Endothelial cell of umbilical vein (primary cell): ENCODE measurements at regions of chr20 and their contacts with region 1.

Region 1: DNA sequence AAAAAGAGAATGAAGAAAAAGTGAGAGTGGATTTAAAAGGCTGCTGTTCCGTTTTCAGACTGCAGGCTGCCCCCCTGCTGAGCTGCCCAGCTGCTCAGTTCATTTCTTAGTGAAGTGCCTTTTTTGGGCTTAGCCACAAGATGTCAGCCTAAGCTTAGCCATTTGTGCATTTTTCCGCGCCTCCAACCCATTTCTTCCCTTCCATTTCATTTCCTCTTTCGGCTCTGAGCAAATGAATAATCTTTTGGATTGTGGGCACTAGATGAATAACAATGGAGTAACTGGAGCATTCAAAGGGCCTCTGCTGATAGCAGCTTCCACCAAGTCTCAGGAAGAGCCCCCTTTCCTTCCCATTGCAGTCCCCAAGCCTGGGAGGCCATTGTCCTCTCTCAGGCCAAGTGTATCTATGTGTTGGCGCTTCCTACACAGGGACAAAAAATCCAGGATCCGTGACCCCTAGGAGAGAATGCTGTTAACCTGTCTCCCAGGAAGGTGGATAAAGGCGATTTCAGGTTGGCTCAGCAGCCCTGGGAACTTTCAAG is 83.5 kb upstream of the SPTLC3 start:
- DNase-seq: peak; percentile 81
- H3K4me3 ChIP-seq: no peak overlapping the region
- H3K27ac ChIP-seq: no peak overlapping the region
- H3K4me1 ChIP-seq: peaks cover 29% of the 10 kb centered on the region
- H3K27me3 ChIP-seq: peaks cover 2 to 3% of the 10 kb centered on the region in 2 experiments
- CTCF ChIP-seq: peak; percentile 90 to 96
- POLR2A ChIP-seq: no peak

Region 2: GRCh38 chr20:11676630-11677284 is 1248.5 kb before region 1 on chr20:
- CTCF ChIA-PET with region 1: interaction called, 8 read pairs
- POLR2A ChIA-PET with region 1: no interaction called
- dilution Hi-C with region 1: no loop called
- intact Hi-C with region 1: loop called (anchors 2 kb)
- DNase-seq: peak; percentile 51
- H3K4me3 ChIP-seq: no peak overlapping the region
- H3K27ac ChIP-seq: no peak overlapping the region
- H3K4me1 ChIP-seq: no peaks in the 10 kb centered on the region
- H3K27me3 ChIP-seq: peaks cover 0 to 5% of the 10 kb centered on the region in 2 experiments
- CTCF ChIP-seq: peak; percentile 70 to 75
- POLR2A ChIP-seq: no peak

Region 3: DNA sequence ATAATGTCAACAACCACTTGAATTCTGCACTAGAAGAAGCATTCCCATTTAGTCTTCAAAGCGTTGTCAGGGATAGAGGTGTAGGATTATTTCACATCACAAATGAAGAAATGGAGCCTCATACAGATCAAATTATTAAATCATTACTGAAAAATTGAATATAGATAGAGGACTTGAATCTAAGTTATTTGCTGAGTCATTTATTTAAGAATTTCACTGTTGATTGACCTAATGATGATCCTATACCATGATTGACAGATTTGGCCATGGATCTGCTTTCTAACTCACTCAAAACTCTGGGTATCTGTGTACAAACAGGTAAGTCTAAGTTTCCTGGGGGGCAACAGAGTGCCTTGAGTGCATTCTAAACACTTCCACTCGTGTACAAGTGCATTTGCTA is 791.7 kb before region 1 on chr20:
- CTCF ChIA-PET with region 1: no interaction called
- POLR2A ChIA-PET with region 1: no interaction called
- dilution Hi-C with region 1: no loop called
- intact Hi-C with region 1: no loop called
- DNase-seq: no peak
- H3K4me3 ChIP-seq: no peak overlapping the region
- H3K27ac ChIP-seq: no peak overlapping the region
- H3K4me1 ChIP-seq: no peaks in the 10 kb centered on the region
- H3K27me3 ChIP-seq: no peaks in the 10 kb centered on the region
- CTCF ChIP-seq: no peak
- POLR2A ChIP-seq: no peak

Region 4: GRCh38 chr20:12970372-12970821 is 45.1 kb after region 1 on chr20:
- CTCF ChIA-PET with region 1: interaction called, 299 read pairs
- POLR2A ChIA-PET with region 1: no interaction called
- dilution Hi-C with region 1: no loop called
- intact Hi-C with region 1: loop called (anchors 1 kb)
- DNase-seq: peak; percentile 56
- H3K4me3 ChIP-seq: no peak overlapping the region
- H3K27ac ChIP-seq: no peak overlapping the region
- H3K4me1 ChIP-seq: no peaks in the 10 kb centered on the region
- H3K27me3 ChIP-seq: peaks cover 0 to 6% of the 10 kb centered on the region in 2 experiments
- CTCF ChIP-seq: peak; percentile 27 to 42
- POLR2A ChIP-seq: no peak

Region 5: GRCh38 chr20:13119583-13119982 is 194.3 kb after region 1 on chr20:
- CTCF ChIA-PET with region 1: interaction called, 11 read pairs
- POLR2A ChIA-PET with region 1: no interaction called
- dilution Hi-C with region 1: no loop called
- intact Hi-C with region 1: loop called (anchors 1 kb)
- DNase-seq: peak; percentile 64
- H3K4me3 ChIP-seq: no peak overlapping the region
- H3K27ac ChIP-seq: no peak overlapping the region
- H3K4me1 ChIP-seq: no peaks in the 10 kb centered on the region
- H3K27me3 ChIP-seq: no peaks in the 10 kb centered on the region
- CTCF ChIP-seq: peak; percentile 68 to 76
- POLR2A ChIP-seq: no peak

Region 6: GRCh38 chr20:13271977-13272975 is 347.0 kb after region 1 on chr20:
- CTCF ChIA-PET with region 1: interaction called, 3 read pairs
- POLR2A ChIA-PET with region 1: no interaction called
- dilution Hi-C with region 1: no loop called
- intact Hi-C with region 1: loop called (anchors 2 kb)
- DNase-seq: no peak
- H3K4me3 ChIP-seq: no peak overlapping the region
- H3K27ac ChIP-seq: no peak overlapping the region
- H3K4me1 ChIP-seq: peaks cover 18% of the 10 kb centered on the region
- H3K27me3 ChIP-seq: peaks cover 0 to 13% of the 10 kb centered on the region in 2 experiments
- CTCF ChIP-seq: no peak
- POLR2A ChIP-seq: no peak

Region 7: DNA sequence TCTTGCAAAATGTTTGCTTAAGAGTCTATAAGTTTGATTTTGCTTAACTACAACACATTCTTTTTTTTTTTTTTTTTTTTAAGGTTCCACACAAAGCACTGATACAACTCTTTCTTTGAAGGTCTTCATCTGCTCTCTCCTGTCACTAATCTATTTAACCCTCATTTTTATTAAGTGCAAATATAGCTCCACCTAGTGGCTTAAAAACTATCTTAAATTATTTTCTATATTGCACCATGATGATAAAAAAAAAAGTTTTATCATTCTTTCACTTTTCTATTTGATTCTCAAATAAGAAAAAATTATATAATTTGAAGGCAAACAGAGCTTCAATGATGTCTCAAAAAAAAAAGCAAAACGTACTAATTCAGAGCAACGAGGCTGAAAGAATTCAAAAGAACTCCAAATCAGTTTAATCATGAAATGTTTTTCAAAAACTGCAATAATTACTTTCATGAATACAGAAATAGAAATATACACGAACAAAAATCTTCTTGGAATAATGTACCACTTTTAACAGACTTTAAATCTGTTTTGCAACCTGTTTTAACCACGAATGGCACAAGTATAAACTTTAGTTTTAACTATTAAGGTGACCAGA is 846.7 kb after region 1 on chr20:
- CTCF ChIA-PET with region 1: interaction called, 5 read pairs
- POLR2A ChIA-PET with region 1: no interaction called
- dilution Hi-C with region 1: no loop called
- intact Hi-C with region 1: loop called (anchors 5 kb)
- DNase-seq: peak; percentile 31
- H3K4me3 ChIP-seq: no peak overlapping the region
- H3K27ac ChIP-seq: peak overlapping the region; percentile 34
- H3K4me1 ChIP-seq: peaks cover 14% of the 10 kb centered on the region
- H3K27me3 ChIP-seq: no peaks in the 10 kb centered on the region
- CTCF ChIP-seq: peak; percentile 8 to 16
- POLR2A ChIP-seq: no peak